Right cardiac atrium (tissue), 5 donors: ENCODE measurements at regions of chr1 and their contacts with region 1.

Region 1: DNA sequence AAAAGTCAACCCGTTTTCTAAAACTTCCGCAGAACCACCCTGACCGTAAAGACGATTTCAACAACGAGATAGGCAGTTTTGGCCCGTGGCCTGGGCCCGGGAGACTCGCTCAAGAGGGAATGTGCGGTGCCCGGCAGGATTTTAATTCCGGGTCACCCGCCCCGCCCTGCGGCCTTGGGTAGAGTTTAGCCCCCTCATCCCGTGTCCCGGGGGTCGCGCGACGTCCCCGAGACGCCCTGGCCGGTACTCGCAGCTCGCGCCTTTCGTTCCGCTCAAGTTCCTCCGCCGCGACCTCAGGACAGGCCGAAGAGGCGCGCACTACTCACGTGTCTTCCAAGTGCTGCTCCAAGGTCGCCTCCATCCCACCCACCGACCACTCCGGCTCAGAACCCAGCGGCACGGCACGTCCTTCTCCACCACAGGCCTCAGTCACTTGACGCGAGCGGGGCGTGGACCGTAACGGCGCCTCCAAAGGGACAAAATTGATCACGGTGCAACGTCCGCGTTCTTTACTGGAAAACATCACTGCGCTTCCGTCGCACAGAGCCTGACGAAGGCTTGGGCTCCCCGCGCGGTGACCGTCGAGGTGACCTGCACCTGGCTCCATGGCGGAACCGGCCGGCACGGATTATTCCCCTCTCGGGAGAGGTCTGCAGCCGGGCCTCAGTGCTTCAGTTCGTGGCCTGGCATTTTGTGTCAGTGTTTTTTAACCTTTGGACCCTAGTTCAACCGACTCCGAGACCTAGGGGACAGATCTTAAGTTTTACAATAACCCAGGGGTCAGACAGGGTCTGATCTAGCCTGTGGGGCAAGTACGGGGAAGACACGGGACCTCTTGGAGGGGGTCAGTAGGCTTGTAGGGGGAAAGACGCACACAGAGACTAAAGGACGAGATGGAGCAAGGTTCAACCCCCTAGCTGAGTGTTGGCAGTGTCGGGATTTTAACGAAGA is at the start of gene LAMTOR5:
- DNase-seq: peak; percentile 94 to 97 (median 97)
- ATAC-seq: peak; percentile 96 to 98
- H3K4me3 ChIP-seq: peak within 1 kb of the TSS; percentile 68
- H3K27ac ChIP-seq: peak within 1 kb of the TSS; percentile 80
- H3K4me1 ChIP-seq: no peaks in the 10 kb centered on the region
- H3K27me3 ChIP-seq: no peaks in the 10 kb centered on the region
- total RNA-seq, gene LAMTOR5: 185 to 236 (median 207) TPM

Region 2: GRCh38 chr1:110227774-110228173 is 179.8 kb before region 1 on chr1:
- intact Hi-C with region 1: no loop called
- DNase-seq: no peak
- ATAC-seq: no peak
- H3K4me3 ChIP-seq: no peak overlapping the region
- H3K27ac ChIP-seq: no peak overlapping the region
- H3K4me1 ChIP-seq: no peaks in the 10 kb centered on the region
- H3K27me3 ChIP-seq: no peaks in the 10 kb centered on the region

Region 3: GRCh38 chr1:110339407-110340206 is 67.9 kb before region 1 on chr1:
- intact Hi-C with region 1: loop called in 2 of 4 experiments (anchors 10 kb)
- DNase-seq: peak; percentile 60 to 82 (median 72)
- ATAC-seq: peak in 1 of 2 donors; percentile 1
- H3K4me3 ChIP-seq: peak overlapping the region; percentile 90
- H3K27ac ChIP-seq: peak overlapping the region; percentile 97
- H3K4me1 ChIP-seq: peaks cover 14% of the 10 kb centered on the region
- H3K27me3 ChIP-seq: no peaks in the 10 kb centered on the region